ENCODE measurements at regions of chr17 and their contacts with region 1.

Region 1: GRCh38 chr17:38667099-38667786 is 7.5 kb downstream of the EPOP start:
- DNase-seq: peak; percentile 61 to 75 (median 66)
- ATAC-seq: peak; percentile 82 to 88 (median 86)
- H3K4me3 ChIP-seq: no peak overlapping the region
- H3K27ac ChIP-seq: no peak overlapping the region
- H3K4me1 ChIP-seq: no peaks in the 10 kb centered on the region
- H3K27me3 ChIP-seq: no peaks in the 10 kb centered on the region
- CTCF ChIP-seq: peak; percentile 97 to 99 (median 98)
- POLR2A ChIP-seq: no peak

Region 2: GRCh38 chr17:38550661-38551060 is 116.6 kb before region 1 on chr17:
- intact Hi-C with region 1: no loop called
- DNase-seq: no peak
- ATAC-seq: peak in 2 of 4 donors; percentile 5 to 66
- H3K4me3 ChIP-seq: no peak overlapping the region
- H3K27ac ChIP-seq: no peak overlapping the region
- H3K4me1 ChIP-seq: no peaks in the 10 kb centered on the region
- H3K27me3 ChIP-seq: no peaks in the 10 kb centered on the region
- CTCF ChIP-seq: no peak
- POLR2A ChIP-seq: no peak

Region 3: GRCh38 chr17:38584350-38584925 is 82.8 kb before region 1 on chr17:
- intact Hi-C with region 1: loop called in 1 of 2 experiments (anchors 10 kb)
- DNase-seq: peak; percentile 70 to 80 (median 75)
- ATAC-seq: peak; percentile 81 to 94 (median 88)
- H3K4me3 ChIP-seq: no peak overlapping the region
- H3K27ac ChIP-seq: no peak overlapping the region
- H3K4me1 ChIP-seq: peaks cover 0 to 13% (median 6%) of the 10 kb centered on the region in 4 donors
- H3K27me3 ChIP-seq: no peaks in the 10 kb centered on the region
- CTCF ChIP-seq: peak; percentile 90 to 98 (median 98)
- POLR2A ChIP-seq: no peak

Region 4: DNA sequence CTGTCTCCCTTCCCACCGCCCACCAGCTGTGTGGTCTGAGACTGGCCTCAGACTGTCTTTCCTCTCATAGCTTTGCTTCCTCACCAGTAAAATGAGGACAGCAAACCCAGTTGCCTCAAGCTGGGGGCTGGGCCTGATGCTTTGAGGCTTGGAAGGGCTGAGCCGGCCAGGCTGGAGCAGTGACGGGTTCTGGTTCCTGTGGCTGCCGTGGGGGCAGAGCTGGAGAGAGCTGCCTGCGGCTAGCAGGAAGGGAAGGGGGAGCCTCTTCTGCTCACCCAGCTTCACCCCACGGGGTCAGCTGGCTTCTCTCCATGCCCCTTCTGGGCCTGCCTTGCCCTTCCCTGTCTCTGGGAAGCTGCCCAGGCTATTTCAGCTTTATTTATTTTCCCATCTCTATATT is 226.4 kb after region 1 on chr17:
- intact Hi-C with region 1: no loop called
- DNase-seq: peak in 1 of 3 donors; percentile 81
- ATAC-seq: peak; percentile 19 to 61 (median 34)
- H3K4me3 ChIP-seq: no peak overlapping the region
- H3K27ac ChIP-seq: peak overlapping the region; percentile 9 to 31 (median 10)
- H3K4me1 ChIP-seq: peaks cover 0 to 50% (median 31%) of the 10 kb centered on the region in 4 donors
- H3K27me3 ChIP-seq: no peaks in the 10 kb centered on the region
- CTCF ChIP-seq: no peak
- POLR2A ChIP-seq: no peak